Left ventricle myocardium inferior (tissue), 1 donor: ENCODE measurements at regions of chr6 and their contacts with region 1.

Region 1: DNA sequence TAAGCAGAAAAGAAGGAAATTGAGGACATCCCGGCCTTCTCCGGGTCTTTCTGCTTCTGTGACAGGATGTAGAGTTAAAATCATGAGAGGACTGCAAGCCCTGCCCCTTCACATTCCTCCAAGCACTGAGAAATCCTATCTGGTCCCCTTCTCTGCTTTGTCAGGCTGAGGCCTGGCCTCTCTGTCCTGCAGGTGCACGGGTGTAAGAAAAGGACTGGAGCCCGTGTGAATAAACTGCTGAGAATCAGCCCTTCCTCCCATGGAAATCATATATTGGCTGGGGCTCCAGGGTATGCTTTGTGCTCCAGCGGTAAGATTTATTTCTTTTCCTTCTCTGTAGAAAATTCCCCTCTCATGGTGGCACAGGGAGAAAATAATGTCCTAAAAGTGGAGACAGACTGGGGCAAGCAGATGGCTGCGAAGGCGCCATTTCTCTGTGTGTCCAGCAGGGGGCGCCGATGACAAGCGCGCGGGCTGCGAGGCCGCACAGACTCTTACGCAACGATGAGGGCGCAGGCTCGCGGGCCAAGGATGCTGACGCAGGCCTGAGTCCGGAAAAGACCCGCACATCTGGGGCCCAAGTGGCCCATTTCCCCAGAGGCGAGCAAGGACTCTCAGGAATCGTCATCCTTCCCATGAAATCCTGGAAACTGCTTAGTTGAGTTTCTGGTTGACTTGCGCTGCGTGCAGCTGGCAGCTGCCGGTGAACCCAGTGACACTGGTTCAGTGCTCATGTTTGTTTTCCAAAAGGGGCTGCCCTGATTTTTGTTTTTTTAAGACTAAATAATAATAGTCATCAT is 258.6 kb downstream of the ADGB start:
- DNase-seq: peak; percentile 87
- H3K4me3 ChIP-seq: peak overlapping the region; percentile 60
- H3K27ac ChIP-seq: peak overlapping the region; percentile 76
- H3K4me1 ChIP-seq: no peaks in the 10 kb centered on the region
- H3K27me3 ChIP-seq: no peaks in the 10 kb centered on the region
- CTCF ChIP-seq: peak; percentile 99

Region 2: DNA sequence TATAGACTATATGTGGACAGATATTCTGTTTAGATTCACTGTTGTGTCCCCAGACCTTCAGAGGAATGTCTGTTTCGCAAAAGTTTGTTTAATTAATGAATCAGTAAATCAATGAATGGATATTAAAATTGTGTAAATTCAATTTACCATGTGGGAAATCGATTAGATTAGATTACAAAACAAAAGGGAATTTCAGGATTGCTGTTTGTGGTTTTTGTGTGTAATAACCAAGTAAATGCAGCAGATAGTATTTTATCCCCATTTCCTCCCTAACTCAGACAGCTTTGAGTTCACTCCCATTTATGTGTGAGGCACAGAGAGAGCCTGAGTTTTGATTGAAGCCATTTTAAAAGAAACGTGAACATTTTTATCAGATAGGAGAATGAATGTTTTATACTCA is 43.8 kb before region 1 on chr6:
- intact Hi-C with region 1: no loop called
- DNase-seq: no peak
- H3K4me3 ChIP-seq: no peak overlapping the region
- H3K27ac ChIP-seq: no peak overlapping the region
- H3K4me1 ChIP-seq: no peaks in the 10 kb centered on the region
- H3K27me3 ChIP-seq: no peaks in the 10 kb centered on the region
- CTCF ChIP-seq: no peak

Region 3: DNA sequence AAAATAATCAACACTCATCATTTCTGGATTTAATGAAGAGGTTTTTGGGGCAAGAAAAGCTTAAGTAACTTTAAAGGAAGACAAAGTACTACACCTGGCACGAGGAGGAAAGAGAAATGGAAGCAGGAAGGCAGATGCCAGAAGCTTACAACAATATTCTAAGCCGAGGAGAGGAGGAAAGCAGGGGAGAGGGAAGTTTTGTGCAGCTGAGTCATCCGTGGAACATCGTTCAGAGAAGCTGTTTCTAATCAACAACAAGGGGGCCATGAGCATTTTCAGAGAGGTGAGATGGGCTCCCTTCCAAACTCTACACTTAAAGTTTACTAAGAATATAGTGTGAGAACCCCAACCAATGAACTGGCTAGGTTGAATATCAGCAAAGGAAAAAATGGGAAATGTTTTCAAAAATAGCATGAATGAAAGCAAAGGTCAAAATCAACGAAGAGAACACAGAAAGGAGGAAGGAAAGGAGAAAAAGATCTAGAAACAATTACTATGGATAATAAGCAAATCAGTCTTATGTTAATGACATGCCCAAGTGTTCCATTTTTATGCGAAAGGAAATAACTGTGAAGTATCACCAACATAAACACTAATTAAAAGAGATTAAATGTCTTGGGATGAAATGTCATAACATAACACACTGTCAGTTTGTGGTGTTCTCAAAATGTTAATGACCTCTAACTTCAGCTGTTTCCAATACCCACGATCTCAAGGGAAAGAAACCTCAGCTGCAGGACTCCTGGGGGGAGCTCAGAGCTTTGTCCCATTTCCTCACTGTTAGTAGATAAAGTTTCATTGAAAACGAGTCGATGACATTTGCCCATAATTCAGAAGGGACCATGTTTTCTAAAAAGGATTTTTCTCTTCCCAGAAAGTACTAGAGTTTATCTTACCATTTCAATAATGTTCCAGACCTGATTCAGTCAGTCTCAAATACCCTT is 143.4 kb after region 1 on chr6:
- intact Hi-C with region 1: no loop called
- DNase-seq: no peak
- H3K4me3 ChIP-seq: no peak overlapping the region
- H3K27ac ChIP-seq: no peak overlapping the region
- H3K4me1 ChIP-seq: no peaks in the 10 kb centered on the region
- H3K27me3 ChIP-seq: no peaks in the 10 kb centered on the region
- CTCF ChIP-seq: no peak

Region 4: GRCh38 chr6:147285087-147285855 is 427.9 kb after region 1 on chr6:
- intact Hi-C with region 1: loop called (anchors 5 kb)
- DNase-seq: no peak
- H3K4me3 ChIP-seq: no peak overlapping the region
- H3K27ac ChIP-seq: no peak overlapping the region
- H3K4me1 ChIP-seq: peaks cover 29% of the 10 kb centered on the region
- H3K27me3 ChIP-seq: no peaks in the 10 kb centered on the region
- CTCF ChIP-seq: peak; percentile 67